ENCODE measurements at regions of chr7 and their contacts with region 1.

Region 1: DNA sequence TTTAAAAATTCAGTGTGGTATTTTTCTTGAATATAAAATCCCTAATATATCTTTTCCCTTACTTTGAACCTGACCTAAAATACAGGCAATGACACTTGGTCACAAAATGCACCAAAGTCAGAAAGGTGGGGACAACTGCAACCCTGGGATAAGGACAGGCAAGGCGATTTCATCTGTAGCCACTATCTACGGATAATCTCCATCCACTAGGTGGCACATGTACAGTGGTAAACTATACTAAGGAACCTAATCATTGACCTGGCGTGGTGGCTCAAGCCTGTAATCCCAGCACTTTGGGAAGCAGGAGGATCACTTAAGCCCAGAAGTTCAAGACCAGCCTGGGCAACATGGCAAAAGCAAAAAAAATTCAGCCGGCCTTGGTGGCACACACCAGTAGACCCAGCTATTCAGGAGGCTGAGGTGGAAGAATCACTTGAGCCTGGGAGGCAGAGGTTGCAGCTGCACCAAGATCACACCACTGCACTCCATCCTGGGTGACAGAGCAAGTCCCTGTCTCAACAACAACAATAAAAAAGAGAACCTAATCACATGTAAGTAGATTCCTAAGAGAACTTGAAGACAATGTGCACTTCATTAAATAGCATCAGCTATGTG is 98.9 kb downstream of the KMT2C start:
- DNase-seq: no peak
- H3K4me3 Mint-ChIP-seq: no peak overlapping the region
- H3K27ac Mint-ChIP-seq: peak overlapping the region; percentile 4
- H3K4me1 Mint-ChIP-seq: peaks cover 29% of the 10 kb centered on the region
- H3K27me3 Mint-ChIP-seq: no peaks in the 10 kb centered on the region

Region 2: GRCh38 chr7:152709287-152710152 is 372.7 kb after region 1 on chr7:
- CTCF ChIA-PET with region 1: interaction called, 11 read pairs
- POLR2A ChIA-PET with region 1: no interaction called
- DNase-seq: no peak
- H3K4me3 Mint-ChIP-seq: no peak overlapping the region
- H3K27ac Mint-ChIP-seq: no peak overlapping the region
- H3K4me1 Mint-ChIP-seq: no peaks in the 10 kb centered on the region
- H3K27me3 Mint-ChIP-seq: peaks cover 5% of the 10 kb centered on the region